Right cardiac atrium (tissue), 5 donors: ENCODE measurements at regions of chr2 and their contacts with region 1.

Region 1: DNA sequence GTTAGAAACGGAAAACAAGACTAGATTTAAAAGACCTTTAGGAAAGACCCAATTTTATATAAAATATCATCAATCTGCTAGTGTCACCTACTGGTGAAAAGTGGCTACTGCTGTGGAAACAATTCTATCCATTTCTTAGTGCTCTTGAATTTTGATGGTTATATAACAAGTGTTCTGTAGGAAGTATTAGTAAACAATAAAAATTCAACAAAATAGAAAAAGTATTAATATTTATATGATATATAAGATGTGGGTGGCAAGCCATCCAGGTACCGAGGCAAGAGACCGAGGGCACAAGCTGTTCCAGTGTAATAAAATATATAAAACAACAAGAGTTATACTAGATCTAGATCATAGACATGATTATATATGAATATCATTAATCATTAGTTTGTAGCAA is 6.2 kb upstream of the TMEM87B start:
- DNase-seq: no peak
- ATAC-seq: peak; percentile 66 to 72
- H3K4me3 ChIP-seq: no peak overlapping the region
- H3K27ac ChIP-seq: no peak overlapping the region
- H3K4me1 ChIP-seq: no peaks in the 10 kb centered on the region
- H3K27me3 ChIP-seq: no peaks in the 10 kb centered on the region

Region 2: GRCh38 chr2:111887819-111888223 is 161.1 kb before region 1 on chr2:
- intact Hi-C with region 1: loop called in 3 of 4 experiments (anchors 1 to 5 kb)
- DNase-seq: peak; percentile 74 to 91 (median 88)
- ATAC-seq: peak; percentile 38 to 50
- H3K4me3 ChIP-seq: no peak overlapping the region
- H3K27ac ChIP-seq: no peak overlapping the region
- H3K4me1 ChIP-seq: no peaks in the 10 kb centered on the region
- H3K27me3 ChIP-seq: no peaks in the 10 kb centered on the region